ENCODE measurements at regions of chr3 and their contacts with region 1.

Region 1: GRCh38 chr3:181176601-181177000 is 187.1 kb upstream of the DNAJC19 start:
- DNase-seq: peak; percentile 22 to 59 (median 50)
- H3K4me3 ChIP-seq: no peak overlapping the region
- H3K27ac ChIP-seq: no peak overlapping the region
- H3K4me1 ChIP-seq: no peaks in the 10 kb centered on the region
- H3K27me3 ChIP-seq: no peaks in the 10 kb centered on the region
- CTCF ChIP-seq: peak in 1 of 3 donors; percentile 41
- EP300 ChIP-seq: no peak
- POLR2A ChIP-seq: no peak

Region 2: DNA sequence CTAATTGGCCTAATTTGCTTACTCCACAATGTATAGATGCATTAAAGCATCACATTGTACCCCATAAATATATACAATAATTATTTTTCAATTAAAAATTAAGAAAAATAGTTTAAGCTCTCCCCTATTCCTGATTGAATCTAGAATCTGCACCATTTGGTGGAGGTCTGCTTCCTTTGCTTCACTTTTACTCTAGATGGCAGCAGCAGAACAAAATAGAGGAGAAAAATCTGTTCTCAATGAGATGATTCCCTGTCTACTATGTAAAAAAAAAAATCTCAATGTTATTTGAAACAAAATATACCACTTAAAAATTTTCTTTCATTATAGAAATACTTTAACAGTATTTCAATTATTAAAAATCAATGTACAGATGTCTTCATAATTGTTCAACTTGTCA is 373.8 kb before region 1 on chr3:
- intact Hi-C with region 1: loop called in 1 of 4 experiments (anchors 10 kb)
- DNase-seq: no peak
- H3K4me3 ChIP-seq: no peak overlapping the region
- H3K27ac ChIP-seq: no peak overlapping the region
- H3K4me1 ChIP-seq: no peaks in the 10 kb centered on the region
- H3K27me3 ChIP-seq: no peaks in the 10 kb centered on the region
- CTCF ChIP-seq: peak in 1 of 3 donors; percentile 12
- EP300 ChIP-seq: no peak
- POLR2A ChIP-seq: no peak